ENCODE measurements at regions of chr10 and their contacts with region 1.

Region 1: DNA sequence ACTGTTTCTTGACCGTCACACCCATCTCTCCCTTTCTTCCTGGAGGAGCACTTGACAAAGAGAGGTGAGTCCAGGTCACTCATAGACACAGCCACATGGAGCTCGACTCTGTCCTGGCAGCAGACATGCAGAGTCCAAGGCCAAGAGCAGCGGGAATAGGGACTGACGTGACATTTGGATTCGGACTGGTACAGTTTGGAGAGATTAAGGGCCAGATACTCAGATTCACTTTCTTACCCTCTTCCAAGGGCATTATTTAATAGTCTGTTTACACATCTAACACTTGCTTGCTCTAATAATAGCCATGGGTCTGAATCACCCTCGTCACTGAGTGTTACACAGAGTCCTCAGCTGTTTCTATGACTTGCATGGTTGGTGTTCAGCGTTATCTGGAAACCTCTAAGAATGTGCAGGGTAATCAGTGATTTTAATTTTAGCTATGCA is 39.2 kb upstream of the OTUD1 start:
- DNase-seq: peak; percentile 28 to 52
- ATAC-seq: peak; percentile 84 to 98 (median 94)
- H3K4me3 ChIP-seq: no peak overlapping the region
- H3K27ac ChIP-seq: peak overlapping the region in 8 of 10 donors; percentile 11 to 88 (median 80)
- H3K4me1 ChIP-seq: peaks cover 0 to 36% (median 8%) of the 10 kb centered on the region in 9 donors
- H3K27me3 ChIP-seq: no peaks in the 10 kb centered on the region
- CTCF ChIP-seq: no peak

Region 2: GRCh38 chr10:23204773-23205172 is 194.9 kb before region 1 on chr10:
- intact Hi-C with region 1: no loop called
- DNase-seq: no peak
- ATAC-seq: no peak
- H3K4me3 ChIP-seq: no peak overlapping the region
- H3K27ac ChIP-seq: no peak overlapping the region
- H3K4me1 ChIP-seq: no peaks in the 10 kb centered on the region
- H3K27me3 ChIP-seq: peaks cover 0 to 81% (median 73%) of the 10 kb centered on the region in 7 donors
- CTCF ChIP-seq: no peak

Region 3: GRCh38 chr10:23344241-23344841 is 55.4 kb before region 1 on chr10 and contains the start of gene C10orf67:
- intact Hi-C with region 1: loop called in 3 of 10 experiments (anchors 1 to 5 kb)
- DNase-seq: peak; percentile 43 to 53
- ATAC-seq: peak; percentile 45 to 82 (median 78)
- H3K4me3 ChIP-seq: peak within 1 kb of the TSS; percentile 22 to 70 (median 60)
- H3K27ac ChIP-seq: peak within 1 kb of the TSS; percentile 13 to 91 (median 69)
- H3K4me1 ChIP-seq: peaks cover 0 to 62% (median 32%) of the 10 kb centered on the region in 9 donors
- H3K27me3 ChIP-seq: peaks cover 0 to 43% (median 0%) of the 10 kb centered on the region in 7 donors
- CTCF ChIP-seq: no peak
- total RNA-seq, gene C10orf67: 0.25 to 1.5 (median 0.47) TPM

Region 4: GRCh38 chr10:23362879-23363792 is 36.6 kb before region 1 on chr10:
- intact Hi-C with region 1: loop called in 1 of 10 experiments (anchors 5 kb)
- DNase-seq: no peak
- ATAC-seq: no peak
- H3K4me3 ChIP-seq: no peak overlapping the region
- H3K27ac ChIP-seq: peak overlapping the region in 1 of 10 donors; percentile 7
- H3K4me1 ChIP-seq: peaks cover 0 to 12% (median 0%) of the 10 kb centered on the region in 9 donors
- H3K27me3 ChIP-seq: no peaks in the 10 kb centered on the region
- CTCF ChIP-seq: no peak

Region 5: DNA sequence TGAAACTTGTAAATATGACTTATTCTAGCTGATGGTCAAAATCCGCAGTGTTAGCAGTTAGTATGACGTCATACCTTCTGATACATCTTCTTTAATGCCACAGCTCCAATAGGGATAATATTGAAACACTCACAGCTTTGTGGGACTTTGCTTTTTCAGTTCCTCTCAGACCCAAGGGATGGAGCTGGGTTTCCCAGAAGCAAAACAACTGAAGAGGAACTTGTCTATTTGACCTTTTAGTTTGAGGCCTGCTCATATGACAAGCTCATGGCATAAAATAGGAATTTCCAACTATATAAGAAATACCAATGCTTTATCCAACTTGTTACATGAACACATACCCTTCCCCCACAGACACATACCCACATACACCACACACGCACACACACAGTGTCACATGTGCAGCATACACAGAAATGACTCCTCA is 23.5 kb before region 1 on chr10:
- intact Hi-C with region 1: no loop called
- DNase-seq: no peak
- ATAC-seq: peak in 7 of 8 donors; percentile 38 to 69 (median 60)
- H3K4me3 ChIP-seq: no peak overlapping the region
- H3K27ac ChIP-seq: peak overlapping the region in 5 of 10 donors; percentile 1 to 79 (median 10)
- H3K4me1 ChIP-seq: peaks cover 0 to 24% (median 0%) of the 10 kb centered on the region in 9 donors
- H3K27me3 ChIP-seq: no peaks in the 10 kb centered on the region
- CTCF ChIP-seq: no peak